ENCODE measurements at regions of chr7 and their contacts with region 1.

Region 1: DNA sequence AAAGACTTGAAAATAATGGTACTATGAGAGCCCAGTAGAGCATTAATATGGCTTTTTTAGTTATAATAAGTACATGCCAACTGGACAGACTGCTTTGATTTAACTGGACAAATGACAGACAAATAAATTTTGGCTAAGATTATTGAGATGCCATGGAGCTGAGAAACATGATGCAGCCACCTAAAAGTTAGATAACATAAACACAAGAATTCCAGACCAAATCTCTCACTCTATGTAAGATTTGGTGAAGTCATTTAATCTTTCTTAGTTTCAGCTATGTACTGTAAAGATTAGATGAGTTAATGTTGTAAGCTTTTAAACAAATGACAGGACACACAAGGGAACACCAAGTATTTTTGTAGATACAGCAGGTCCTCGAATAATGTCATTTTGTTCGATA is 118.2 kb downstream of the CACNA2D1 start:
- DNase-seq: no peak
- H3K4me3 ChIP-seq: no peak overlapping the region
- H3K27ac ChIP-seq: no peak overlapping the region
- H3K4me1 ChIP-seq: no peaks in the 10 kb centered on the region
- H3K27me3 ChIP-seq: no peaks in the 10 kb centered on the region
- CTCF ChIP-seq: no peak

Region 2: DNA sequence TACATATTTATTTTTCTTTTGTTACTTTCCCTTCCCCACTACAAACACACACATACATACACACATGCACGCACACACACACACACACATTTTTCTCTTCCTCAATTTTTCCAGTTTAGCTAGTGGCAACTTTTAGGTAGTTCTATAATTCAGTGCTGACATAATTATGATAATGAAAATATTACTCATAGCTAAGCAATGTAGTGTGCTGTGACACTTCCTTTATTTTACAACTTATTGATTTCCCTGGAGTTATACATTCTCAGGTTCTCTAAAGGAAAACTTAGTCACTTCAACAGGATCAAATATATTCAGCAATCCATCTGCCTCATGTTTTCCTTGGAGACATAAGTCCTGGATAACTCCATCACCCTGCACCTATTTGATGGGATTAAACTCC is 33.5 kb before region 1 on chr7:
- CTCF ChIA-PET with region 1: no interaction called
- POLR2A ChIA-PET with region 1: no interaction called
- intact Hi-C with region 1: no loop called
- DNase-seq: peak in 1 of 2 experiments; percentile 42
- H3K4me3 ChIP-seq: no peak overlapping the region
- H3K27ac ChIP-seq: no peak overlapping the region
- H3K4me1 ChIP-seq: no peaks in the 10 kb centered on the region
- H3K27me3 ChIP-seq: no peaks in the 10 kb centered on the region
- CTCF ChIP-seq: no peak

Region 3: DNA sequence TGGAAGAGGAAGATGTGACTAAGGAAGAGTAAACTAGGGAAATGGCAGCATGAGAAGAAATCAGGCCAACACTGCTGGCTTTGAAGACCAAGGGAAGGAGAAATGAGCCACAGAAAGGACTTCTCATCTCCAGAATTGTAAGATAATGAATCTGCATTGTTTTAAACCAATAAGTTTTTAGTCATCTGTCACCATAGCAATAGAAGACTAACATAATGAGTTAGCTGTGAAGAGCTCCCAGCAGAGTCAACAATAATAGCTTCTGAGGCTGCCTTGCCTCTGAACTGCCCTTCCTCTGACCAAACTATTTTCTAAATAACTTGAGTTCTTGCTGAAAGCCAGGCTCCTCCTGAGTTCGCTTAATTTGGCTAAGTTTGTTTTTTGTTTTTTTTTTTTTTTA is 14.5 kb after region 1 on chr7:
- CTCF ChIA-PET with region 1: interaction called, 12 read pairs
- POLR2A ChIA-PET with region 1: no interaction called
- intact Hi-C with region 1: no loop called
- DNase-seq: no peak
- H3K4me3 ChIP-seq: no peak overlapping the region
- H3K27ac ChIP-seq: no peak overlapping the region
- H3K4me1 ChIP-seq: no peaks in the 10 kb centered on the region
- H3K27me3 ChIP-seq: no peaks in the 10 kb centered on the region
- CTCF ChIP-seq: no peak

Region 4: DNA sequence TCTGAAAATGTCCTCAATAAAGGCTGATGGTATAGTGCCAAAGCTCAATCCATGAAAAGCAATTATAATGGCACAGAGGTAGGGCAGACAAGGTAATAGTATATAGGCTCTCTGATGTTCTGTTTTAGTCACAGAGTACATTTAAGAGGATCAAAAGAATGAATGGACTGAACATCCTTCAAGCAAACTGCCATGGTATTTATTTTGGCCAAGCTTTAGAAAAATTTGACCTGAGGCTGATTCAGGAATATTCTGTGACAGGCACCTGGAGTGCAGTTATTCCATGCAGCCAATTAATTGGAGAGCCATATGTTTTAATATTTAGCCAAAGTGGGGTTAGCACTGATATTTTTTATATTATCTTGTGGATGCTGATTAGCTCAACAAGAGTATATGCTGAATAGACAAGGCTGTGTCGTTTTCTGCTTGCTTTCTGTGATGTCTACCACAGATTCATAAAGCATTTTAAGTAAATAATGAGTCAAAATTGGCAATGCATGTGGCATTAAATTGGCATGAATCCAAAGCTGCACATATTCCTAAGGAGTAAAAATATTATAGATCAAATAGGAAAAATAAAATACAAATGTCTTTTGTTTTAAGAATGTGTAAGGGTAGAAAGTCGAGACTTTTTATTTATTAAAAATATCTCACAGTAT is 659.9 kb after region 1 on chr7:
- CTCF ChIA-PET with region 1: no interaction called
- POLR2A ChIA-PET with region 1: no interaction called
- intact Hi-C with region 1: no loop called
- DNase-seq: no peak
- H3K4me3 ChIP-seq: no peak overlapping the region
- H3K27ac ChIP-seq: no peak overlapping the region
- H3K4me1 ChIP-seq: peaks cover 10% of the 10 kb centered on the region; the same call in 1 of the 2 replicates
- H3K27me3 ChIP-seq: no peaks in the 10 kb centered on the region
- CTCF ChIP-seq: no peak